Mammary epithelial cell (primary cell): ENCODE measurements at regions of chr11 and their contacts with region 1.

Region 1: DNA sequence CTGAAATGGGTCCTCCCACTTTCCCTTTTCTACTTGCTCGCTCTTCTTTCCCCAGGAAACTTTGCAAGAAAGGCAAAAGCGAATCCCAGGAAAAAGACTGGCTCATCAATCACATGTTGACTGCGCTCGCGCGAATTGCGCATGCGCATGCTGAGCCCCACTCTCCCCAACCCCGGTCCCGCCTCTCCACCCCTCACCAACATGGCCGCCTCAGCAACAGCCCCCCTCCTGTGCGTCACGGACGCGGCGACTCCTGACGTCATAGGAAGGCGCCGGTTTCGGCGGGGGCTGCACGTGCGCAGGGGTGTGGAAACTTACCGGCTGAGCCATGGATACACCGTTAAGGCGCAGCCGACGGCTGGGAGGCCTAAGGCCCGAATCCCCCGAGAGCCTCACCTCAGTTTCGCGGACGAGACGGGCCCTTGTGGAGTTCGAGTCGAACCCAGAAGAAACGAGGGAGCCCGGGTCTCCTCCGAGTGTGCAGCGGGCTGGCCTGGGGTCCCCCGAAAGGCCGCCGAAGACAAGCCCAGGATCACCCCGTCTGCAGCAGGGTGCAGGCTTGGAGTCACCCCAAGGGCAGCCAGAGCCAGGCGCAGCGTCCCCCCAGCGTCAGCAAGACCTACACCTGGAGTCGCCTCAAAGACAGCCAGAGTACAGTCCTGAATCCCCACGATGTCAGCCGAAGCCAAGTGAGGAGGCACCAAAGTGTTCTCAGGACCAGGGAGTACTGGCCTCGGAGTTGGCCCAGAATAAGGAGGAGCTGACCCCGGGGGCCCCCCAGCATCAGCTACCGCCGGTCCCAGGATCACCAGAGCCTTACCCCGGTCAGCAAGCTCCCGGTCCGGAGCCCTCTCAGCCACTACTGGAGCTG is at the start of gene CCDC86:
- DNase-seq: peak; percentile 94
- H3K4me3 ChIP-seq: peak within 1 kb of the TSS; percentile 76 to 94 (median 77)
- H3K27ac ChIP-seq: peak within 1 kb of the TSS; percentile 85
- H3K4me1 ChIP-seq: peaks cover 25% of the 10 kb centered on the region
- H3K27me3 ChIP-seq: no peaks in the 10 kb centered on the region
- CTCF ChIP-seq: no peak
- total RNA-seq, gene CCDC86: 14.7 to 58.0 TPM

Region 2: DNA sequence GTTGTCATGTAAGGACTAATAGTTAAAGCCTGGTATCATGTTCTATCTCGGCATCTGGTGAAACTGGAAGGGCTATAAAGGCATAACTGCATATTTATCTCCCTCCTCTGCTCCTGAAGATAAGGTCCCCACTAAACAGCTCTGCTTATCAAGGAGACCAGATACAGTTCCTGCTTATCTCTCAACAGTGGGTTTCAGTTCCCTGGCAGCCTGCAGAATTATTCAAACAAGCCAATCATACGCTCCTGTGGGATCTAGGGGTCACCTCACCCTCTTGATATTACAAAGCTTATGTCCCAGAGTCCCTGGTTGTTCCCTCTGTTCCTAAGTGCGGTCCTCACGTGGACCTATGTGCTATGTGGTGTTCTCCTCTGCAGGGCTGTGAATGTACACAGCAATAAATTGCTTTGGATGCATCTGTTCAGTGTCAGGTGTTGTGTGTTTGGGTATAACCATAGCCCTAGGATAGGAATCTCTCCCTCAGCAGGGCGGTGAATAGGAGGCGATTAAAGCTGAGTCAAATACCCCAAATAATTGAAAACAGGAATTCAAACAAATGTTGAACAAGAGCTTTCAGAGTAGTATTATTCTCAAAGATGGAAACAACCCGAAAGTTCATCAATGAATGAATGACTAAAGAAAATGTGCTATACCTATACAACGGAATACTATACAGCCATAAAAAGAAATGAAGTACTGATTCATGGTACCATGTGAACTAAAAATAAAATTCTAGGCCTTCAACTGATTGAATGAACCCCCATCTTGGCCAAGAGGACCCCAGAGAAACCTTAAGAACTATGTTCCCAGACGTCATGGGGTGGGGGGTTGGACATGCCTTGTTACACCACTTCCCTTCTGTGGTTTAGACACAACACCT is 881.3 kb before region 1 on chr11:
- CTCF ChIA-PET with region 1: no interaction called
- dilution Hi-C with region 1: no loop called
- in situ Hi-C with region 1: no loop called
- intact Hi-C with region 1: no loop called
- DNase-seq: no peak
- H3K4me3 ChIP-seq: no peak overlapping the region
- H3K27ac ChIP-seq: no peak overlapping the region
- H3K4me1 ChIP-seq: no peaks in the 10 kb centered on the region
- H3K27me3 ChIP-seq: no peaks in the 10 kb centered on the region
- CTCF ChIP-seq: no peak

Region 3: GRCh38 chr11:60899046-60899936 is 57.3 kb after region 1 on chr11:
- CTCF ChIA-PET with region 1: no interaction called
- dilution Hi-C with region 1: no loop called
- in situ Hi-C with region 1: loop called in 1 of 2 experiments (anchors 10 kb)
- intact Hi-C with region 1: loop called (anchors 2 kb)
- DNase-seq: peak; percentile 51
- H3K4me3 ChIP-seq: no peak overlapping the region
- H3K27ac ChIP-seq: no peak overlapping the region
- H3K4me1 ChIP-seq: no peaks in the 10 kb centered on the region
- H3K27me3 ChIP-seq: no peaks in the 10 kb centered on the region
- CTCF ChIP-seq: peak; percentile 94 to 99

Region 4: GRCh38 chr11:60906132-60906972 is 64.3 kb after region 1 on chr11 and contains the start of gene PRPF19:
- CTCF ChIA-PET with region 1: no interaction called
- dilution Hi-C with region 1: no loop called
- in situ Hi-C with region 1: loop called in 1 of 2 experiments (anchors 5 kb)
- intact Hi-C with region 1: loop called (anchors 2 kb)
- DNase-seq: peak; percentile 96
- H3K4me3 ChIP-seq: peak within 1 kb of the TSS; percentile 85 to 92 (median 92)
- H3K27ac ChIP-seq: peak within 1 kb of the TSS; percentile 85
- H3K4me1 ChIP-seq: peaks cover 17% of the 10 kb centered on the region
- H3K27me3 ChIP-seq: no peaks in the 10 kb centered on the region
- CTCF ChIP-seq: no peak
- total RNA-seq, gene PRPF19: 70.0 to 93.2 TPM

Region 5: GRCh38 chr11:61161190-61162091 is 319.4 kb after region 1 on chr11 and contains the start of gene VPS37C:
- CTCF ChIA-PET with region 1: no interaction called
- dilution Hi-C with region 1: no loop called
- in situ Hi-C with region 1: loop called in 1 of 2 experiments (anchors 25 kb)
- intact Hi-C with region 1: no loop called
- DNase-seq: peak; percentile 87
- H3K4me3 ChIP-seq: peak within 1 kb of the TSS; percentile 57 to 82 (median 65)
- H3K27ac ChIP-seq: peak within 1 kb of the TSS; percentile 80
- H3K4me1 ChIP-seq: peaks cover 32% of the 10 kb centered on the region
- H3K27me3 ChIP-seq: no peaks in the 10 kb centered on the region
- CTCF ChIP-seq: no peak
- total RNA-seq, gene VPS37C: 10.7 to 17.1 TPM